A549 (cell line): ENCODE measurements at regions of chr3 and their contacts with region 1.

Region 1: DNA sequence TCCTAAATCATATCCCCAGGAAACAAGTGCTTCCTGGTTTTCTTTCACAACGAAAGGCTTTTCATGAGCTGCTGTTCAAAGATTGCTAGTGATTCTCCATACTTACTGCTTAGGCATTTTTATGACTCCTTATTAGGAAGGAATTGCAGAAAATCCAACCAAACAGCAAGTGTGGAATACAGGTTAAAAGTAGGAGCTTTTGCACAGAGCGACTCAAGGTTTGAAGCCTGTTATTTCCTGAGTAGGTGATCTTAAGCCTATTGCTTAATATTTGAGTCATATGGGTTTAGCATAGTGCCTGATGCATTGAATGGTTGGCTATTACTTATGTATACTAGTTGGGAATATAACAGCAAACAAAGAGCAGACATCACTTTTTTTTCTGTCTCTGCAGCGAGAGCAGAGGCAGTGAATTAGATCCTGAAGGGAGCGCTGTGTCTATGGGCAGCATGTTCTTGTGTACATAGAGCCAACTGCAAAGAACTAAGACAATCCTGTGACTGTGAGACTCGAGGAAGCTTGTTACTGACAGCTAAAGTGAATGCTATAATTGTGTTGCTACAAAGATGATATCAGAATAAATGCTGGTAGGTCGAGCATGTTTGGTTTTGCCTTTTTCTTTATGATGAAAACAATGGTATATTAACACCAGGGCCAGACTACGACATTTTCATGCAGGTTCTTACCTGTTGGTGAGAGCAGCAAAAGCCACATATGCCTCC is 6.3 kb downstream of the TM4SF1 start:
- DNase-seq: peak in 1 of 2 experiments; percentile 74
- ATAC-seq: peak in 1 of 2 experiments; percentile 0; a peak in 1 of 6 replicates
- H3K4me3 ChIP-seq: peak overlapping the region; percentile 58
- H3K27ac ChIP-seq: peak overlapping the region; percentile 79 to 88
- H3K4me1 ChIP-seq: peaks cover 86% of the 10 kb centered on the region
- CTCF ChIP-seq: peak; percentile 41; the same call in 2 of the 3 replicates
- EP300 ChIP-seq: no peak
- POLR2A ChIP-seq: no peak
- RAD21 ChIP-seq: peak; percentile 39 to 43; a peak in 4 of 5 replicates

Region 2: DNA sequence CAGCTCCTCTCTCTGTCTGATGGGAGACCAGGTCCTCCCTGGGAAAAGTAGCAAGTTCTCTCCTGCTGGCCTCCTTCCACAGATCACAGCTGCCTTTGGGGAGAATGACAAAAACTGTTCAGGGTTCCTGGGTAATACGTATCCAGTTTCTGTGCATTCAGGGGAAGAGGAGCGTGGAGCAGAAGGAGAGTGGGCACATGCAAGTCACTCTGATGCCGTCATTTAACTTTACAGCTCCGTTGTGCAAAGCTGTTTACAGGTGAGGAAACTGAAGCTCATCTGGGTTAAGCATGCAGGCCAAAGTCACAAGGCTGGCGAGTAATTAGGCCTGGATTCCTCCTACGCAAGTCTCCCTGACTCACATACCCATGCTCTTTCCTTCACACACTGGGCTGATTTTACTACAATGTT is 13.8 kb after region 1 on chr3:
- CTCF ChIA-PET with region 1: interaction called, 23 read pairs
- POLR2A ChIA-PET with region 1: interaction called, 23 read pairs
- DNase-seq: peak in 1 of 2 experiments; percentile 70
- ATAC-seq: no peak
- H3K4me3 ChIP-seq: no peak overlapping the region
- H3K27ac ChIP-seq: peak overlapping the region; percentile 93 to 94
- H3K4me1 ChIP-seq: peaks cover 77% of the 10 kb centered on the region
- CTCF ChIP-seq: no peak
- EP300 ChIP-seq: no peak
- POLR2A ChIP-seq: no peak
- RAD21 ChIP-seq: no peak

Region 3: GRCh38 chr3:149585401-149585726 is 214.2 kb after region 1 on chr3:
- CTCF ChIA-PET with region 1: no interaction called
- POLR2A ChIA-PET with region 1: no interaction called
- DNase-seq: no peak
- ATAC-seq: no peak
- H3K4me3 ChIP-seq: no peak overlapping the region
- H3K27ac ChIP-seq: peak overlapping the region; percentile 72 to 94; a peak in 5 of 6 replicates
- H3K4me1 ChIP-seq: peaks cover 98% of the 10 kb centered on the region
- CTCF ChIP-seq: no peak
- EP300 ChIP-seq: no peak
- POLR2A ChIP-seq: no peak
- RAD21 ChIP-seq: no peak